ENCODE measurements at regions of chr1 and their contacts with region 1.

Region 1: GRCh38 chr1:12596007-12596821 is 21.8 kb downstream of the DHRS3 start:
- DNase-seq: peak; percentile 91 to 96
- ATAC-seq: peak; percentile 31 to 55
- H3K4me3 ChIP-seq: peak overlapping the region; percentile 43 to 53 (median 52)
- H3K27ac ChIP-seq: peak overlapping the region; percentile 83 to 93 (median 88)
- H3K4me1 ChIP-seq: peaks cover 87 to 90% of the 10 kb centered on the region in 2 donors
- H3K27me3 ChIP-seq: no peaks in the 10 kb centered on the region
- CTCF ChIP-seq: peak in 1 of 5 experiments; percentile 10
- POLR2A ChIP-seq: peak; percentile 57 to 74

Region 2: DNA sequence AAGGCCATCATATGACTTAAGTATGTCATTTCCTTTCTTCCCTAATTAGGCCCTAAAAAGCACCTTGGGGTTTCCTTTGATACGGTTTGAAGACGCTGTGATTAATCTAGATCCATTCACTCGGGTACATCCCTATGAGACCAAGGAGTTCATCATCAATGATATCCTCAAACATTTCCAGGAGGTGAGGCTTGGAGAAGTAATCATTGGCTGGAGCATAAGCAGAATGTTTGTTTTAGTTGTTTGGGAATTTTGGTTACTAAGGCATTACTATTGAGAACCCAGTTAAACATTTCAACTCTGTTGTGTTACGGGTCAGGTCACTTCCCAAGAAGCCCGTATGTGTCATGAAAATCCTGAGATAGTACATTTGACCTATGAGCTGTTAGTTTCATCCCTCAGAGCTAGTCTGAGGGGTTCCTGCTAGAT is 181.2 kb before region 1 on chr1:
- in situ Hi-C with region 1: no loop called
- intact Hi-C with region 1: no loop called
- DNase-seq: no peak
- ATAC-seq: no peak
- H3K4me3 ChIP-seq: no peak overlapping the region
- H3K27ac ChIP-seq: no peak overlapping the region
- H3K4me1 ChIP-seq: peaks cover 1 to 2% of the 10 kb centered on the region in 2 donors
- H3K27me3 ChIP-seq: no peaks in the 10 kb centered on the region
- CTCF ChIP-seq: no peak
- POLR2A ChIP-seq: no peak

Region 3: GRCh38 chr1:12454406-12455391 is 141.5 kb before region 1 on chr1:
- in situ Hi-C with region 1: no loop called
- intact Hi-C with region 1: loop called (anchors 5 kb)
- DNase-seq: peak; percentile 85 to 88
- ATAC-seq: peak; percentile 55 to 67
- H3K4me3 ChIP-seq: no peak overlapping the region
- H3K27ac ChIP-seq: peak overlapping the region; percentile 84 to 91 (median 90)
- H3K4me1 ChIP-seq: peaks cover 71 to 84% of the 10 kb centered on the region in 2 donors
- H3K27me3 ChIP-seq: no peaks in the 10 kb centered on the region
- CTCF ChIP-seq: no peak
- POLR2A ChIP-seq: peak in 1 of 2 donors; percentile 37

Region 4: GRCh38 chr1:12464598-12465056 is 131.6 kb before region 1 on chr1:
- in situ Hi-C with region 1: no loop called
- intact Hi-C with region 1: loop called (anchors 5 kb)
- DNase-seq: peak; percentile 84 to 88
- ATAC-seq: peak; percentile 91 to 97
- H3K4me3 ChIP-seq: peak overlapping the region in 1 of 4 donors; percentile 4
- H3K27ac ChIP-seq: peak overlapping the region; percentile 67 to 89 (median 81)
- H3K4me1 ChIP-seq: peaks cover 61 to 70% of the 10 kb centered on the region in 2 donors
- H3K27me3 ChIP-seq: no peaks in the 10 kb centered on the region
- CTCF ChIP-seq: no peak
- POLR2A ChIP-seq: no peak

Region 5: GRCh38 chr1:12539705-12540579 is 56.3 kb before region 1 on chr1:
- in situ Hi-C with region 1: loop called in 1 of 4 experiments (anchors 10 kb)
- intact Hi-C with region 1: loop called (anchors 2 kb)
- DNase-seq: peak; percentile 77 to 89
- ATAC-seq: peak; percentile 83 to 91
- H3K4me3 ChIP-seq: peak overlapping the region; percentile 22 to 40 (median 37)
- H3K27ac ChIP-seq: peak overlapping the region; percentile 75 to 83 (median 81)
- H3K4me1 ChIP-seq: peaks cover 13 to 18% of the 10 kb centered on the region in 2 donors
- H3K27me3 ChIP-seq: no peaks in the 10 kb centered on the region
- CTCF ChIP-seq: no peak
- POLR2A ChIP-seq: peak in 1 of 2 donors; percentile 12

Region 6: DNA sequence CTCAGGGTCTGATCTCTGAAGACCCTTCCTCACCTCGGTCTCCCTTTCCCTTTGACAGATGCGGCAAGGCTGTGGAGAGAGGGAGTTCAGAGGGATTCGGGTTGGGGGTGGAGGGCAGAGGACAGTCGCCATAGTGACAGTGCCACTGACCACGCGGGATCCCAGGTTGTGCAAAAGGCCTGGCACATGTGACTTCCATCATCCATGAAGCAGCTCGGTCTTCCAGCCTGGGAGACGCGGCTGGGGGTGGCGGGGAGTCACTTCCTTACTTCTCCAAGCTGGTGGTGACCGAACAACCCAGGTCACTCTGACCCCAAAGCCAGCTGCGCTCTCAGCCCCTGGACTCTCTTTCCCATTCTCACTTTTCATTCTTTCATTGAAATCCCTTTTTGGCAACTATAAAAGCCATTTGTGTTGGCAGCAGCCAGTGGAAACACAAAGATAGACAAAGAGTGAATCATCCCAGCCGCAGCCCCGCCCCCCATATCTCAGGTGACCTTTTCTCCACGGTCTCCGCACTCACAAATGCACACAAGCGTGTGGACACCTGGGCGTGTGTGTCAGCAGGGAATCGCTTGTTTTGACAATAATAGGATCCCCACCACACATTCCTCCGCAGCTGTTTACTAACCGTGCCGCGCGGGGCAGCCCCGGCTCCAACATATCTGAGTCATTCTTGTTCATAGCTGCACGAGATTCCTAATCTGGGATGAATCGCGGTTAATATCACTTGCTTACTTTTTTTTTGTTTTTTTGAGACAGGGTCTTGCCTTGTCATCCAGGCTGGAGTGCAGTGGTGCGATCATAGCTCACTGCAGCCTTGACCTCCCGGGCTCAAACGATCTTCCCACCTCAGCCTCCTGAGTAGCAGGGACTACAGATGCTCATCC is 46.5 kb before region 1 on chr1:
- in situ Hi-C with region 1: loop called in 1 of 4 experiments (anchors 10 kb)
- intact Hi-C with region 1: no loop called
- DNase-seq: peak; percentile 89 to 91
- ATAC-seq: peak; percentile 68 to 81
- H3K4me3 ChIP-seq: peak overlapping the region; percentile 8 to 38 (median 20)
- H3K27ac ChIP-seq: peak overlapping the region; percentile 76 to 88 (median 86)
- H3K4me1 ChIP-seq: peaks cover 49 to 54% of the 10 kb centered on the region in 2 donors
- H3K27me3 ChIP-seq: no peaks in the 10 kb centered on the region
- CTCF ChIP-seq: no peak
- POLR2A ChIP-seq: peak in 1 of 2 donors; percentile 26